CD4-positive, alpha-beta memory T cell (primary cell): ENCODE measurements at regions of chr19 and their contacts with region 1.

Region 1: DNA sequence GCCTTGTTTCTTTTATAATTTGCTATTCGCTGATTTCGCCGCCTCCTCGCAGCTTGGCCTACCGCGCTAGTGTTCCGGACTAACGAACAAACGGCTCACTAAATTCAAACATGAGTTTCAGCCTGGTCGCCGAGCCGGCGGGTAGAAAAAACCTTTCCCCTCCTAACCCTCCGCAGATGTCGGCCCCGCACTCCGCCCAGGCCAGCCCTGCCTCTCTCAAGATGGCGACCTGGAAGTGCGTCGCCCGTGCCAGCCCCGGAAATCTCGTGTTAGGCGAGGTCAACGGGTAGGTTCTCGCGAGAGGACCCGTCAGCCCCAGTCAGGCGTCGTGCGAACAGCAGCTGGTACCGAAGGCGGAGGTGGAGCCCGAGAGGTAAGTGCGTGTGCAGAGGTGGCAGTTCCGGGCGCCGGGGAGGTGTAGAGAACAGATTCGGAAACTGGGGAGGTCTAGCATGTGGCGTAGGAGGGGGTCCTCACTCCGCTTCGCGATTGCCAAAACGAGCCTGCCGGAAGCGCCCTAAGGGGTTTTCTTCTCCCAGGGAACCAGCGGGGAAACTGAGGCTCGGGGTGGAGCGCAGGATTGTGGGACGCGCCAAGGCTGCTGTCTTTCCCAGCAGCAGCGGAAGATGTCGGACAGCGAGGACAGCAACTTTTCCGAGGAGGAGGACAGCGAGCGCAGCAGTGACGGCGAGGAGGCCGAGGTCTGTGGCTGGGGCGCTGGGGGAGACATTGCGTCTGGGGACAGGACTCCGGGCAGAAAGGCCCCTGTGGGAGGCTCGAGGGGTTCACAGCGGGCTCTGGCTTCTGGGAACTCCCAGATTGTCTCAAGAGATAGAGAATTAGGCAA is at the start of gene SUPT5H:
- DNase-seq: peak; percentile 96 to 99 (median 99)
- H3K4me3 ChIP-seq: peak within 1 kb of the TSS; percentile 98
- H3K4me3 Mint-ChIP-seq: peak within 1 kb of the TSS; percentile 89 to 98 (median 96)
- H3K27ac ChIP-seq: peak within 1 kb of the TSS; percentile 99
- H3K27ac Mint-ChIP-seq: peak within 1 kb of the TSS; percentile 88 to 98 (median 95)
- H3K4me1 ChIP-seq: peaks cover 52% of the 10 kb centered on the region
- H3K4me1 Mint-ChIP-seq: peaks cover 38 to 65% (median 48%) of the 10 kb centered on the region in 4 donors
- H3K27me3 ChIP-seq: no peaks in the 10 kb centered on the region
- H3K27me3 Mint-ChIP-seq: peaks cover 0 to 2% of the 10 kb centered on the region in 2 donors
- total RNA-seq, gene SUPT5H: 234 to 236 TPM

Region 2: DNA sequence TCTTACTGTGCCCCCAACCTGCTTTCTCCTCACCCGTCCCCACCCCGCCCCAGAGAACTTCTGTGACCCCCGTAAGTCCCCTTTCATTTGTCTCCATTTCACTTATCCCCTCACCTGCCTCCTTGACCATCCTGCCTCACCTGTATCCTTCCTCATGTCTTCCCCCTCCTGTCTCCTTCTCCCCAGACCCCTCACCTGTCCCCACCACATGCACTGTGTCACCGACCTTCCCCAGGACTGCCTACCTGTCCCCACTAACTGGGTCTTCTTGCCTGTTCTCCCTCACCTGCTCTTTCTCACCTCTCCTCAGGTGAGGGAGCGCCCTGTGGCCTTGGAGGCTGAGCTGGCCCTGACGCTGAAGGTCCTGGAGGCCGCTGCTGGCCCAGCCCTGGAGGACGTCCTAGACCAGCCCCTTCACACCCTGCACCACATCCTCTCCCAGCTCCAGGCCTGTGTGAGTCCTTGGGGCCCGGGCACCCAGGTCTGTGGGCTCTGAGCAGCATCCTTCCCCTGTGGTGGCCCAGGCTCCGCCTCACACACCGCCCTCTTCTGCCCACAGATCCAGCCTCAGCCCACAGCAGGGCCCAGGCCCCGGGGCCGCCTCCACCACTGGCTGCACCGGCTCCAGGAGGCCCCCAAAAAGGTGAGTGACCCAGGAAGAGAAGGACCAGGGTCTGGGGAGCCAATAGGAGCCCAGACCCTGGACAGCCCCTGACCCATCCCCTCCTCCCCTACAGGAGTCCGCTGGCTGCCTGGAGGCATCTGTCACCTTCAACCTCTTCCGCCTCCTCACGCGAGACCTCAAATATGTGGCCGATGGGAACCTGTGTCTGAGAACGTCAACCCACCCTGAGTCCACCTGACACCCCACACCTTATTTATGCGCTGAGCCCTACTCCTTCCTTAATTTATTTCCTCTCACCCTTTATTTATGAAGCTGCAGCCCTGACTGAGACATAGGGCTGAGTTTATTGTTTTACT is 147.5 kb before region 1 on chr19:
- CTCF ChIA-PET with region 1: no interaction called
- POLR2A ChIA-PET with region 1: no interaction called
- intact Hi-C with region 1: no loop called
- DNase-seq: peak; percentile 56 to 75 (median 70)
- H3K4me3 ChIP-seq: peak overlapping the region in 1 of 2 donors; percentile 15
- H3K4me3 Mint-ChIP-seq: peak overlapping the region; percentile 60 to 85 (median 80)
- H3K27ac ChIP-seq: no peak overlapping the region
- H3K27ac Mint-ChIP-seq: peak overlapping the region; percentile 54 to 91 (median 77)
- H3K4me1 ChIP-seq: peaks cover 15% of the 10 kb centered on the region
- H3K4me1 Mint-ChIP-seq: peaks cover 10 to 33% (median 20%) of the 10 kb centered on the region in 4 donors
- H3K27me3 ChIP-seq: no peaks in the 10 kb centered on the region
- H3K27me3 Mint-ChIP-seq: no peaks in the 10 kb centered on the region

Region 3: DNA sequence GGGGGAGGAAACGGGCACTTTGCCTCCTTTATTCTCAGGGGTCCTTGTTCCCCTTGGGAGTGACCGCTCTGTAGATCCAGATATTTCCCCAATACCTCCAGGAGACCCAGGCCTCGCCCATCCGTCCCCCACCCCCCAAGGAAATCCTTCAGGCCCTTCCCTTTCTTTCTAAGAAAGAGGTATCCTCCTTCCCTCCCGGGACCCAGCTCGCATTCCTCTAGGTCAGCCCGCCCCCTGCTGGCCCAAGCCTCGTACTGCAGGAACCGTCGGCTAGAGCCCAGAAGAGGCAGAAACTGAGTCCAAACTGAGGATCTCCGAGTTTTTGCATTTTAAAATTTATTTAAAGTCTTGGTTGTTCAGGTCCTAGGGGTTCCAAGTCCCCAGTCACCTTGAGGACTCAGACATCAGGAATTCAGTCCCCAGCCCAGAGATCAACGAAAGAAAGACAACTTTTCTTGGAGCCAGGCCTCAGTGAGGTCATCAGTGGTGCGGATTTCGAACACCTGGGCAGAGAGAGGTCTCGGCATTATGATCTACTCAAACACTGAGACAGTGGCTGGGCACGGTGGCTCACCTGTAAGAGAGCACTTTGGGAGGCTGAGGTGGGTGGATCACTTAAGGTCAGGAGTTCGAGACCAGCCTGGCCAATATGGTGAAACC is 117.3 kb before region 1 on chr19:
- CTCF ChIA-PET with region 1: no interaction called
- POLR2A ChIA-PET with region 1: no interaction called
- intact Hi-C with region 1: no loop called
- DNase-seq: peak; percentile 67 to 77 (median 73)
- H3K4me3 ChIP-seq: no peak overlapping the region
- H3K4me3 Mint-ChIP-seq: peak overlapping the region in 4 of 8 donors; percentile 32 to 78 (median 58)
- H3K27ac ChIP-seq: peak overlapping the region; percentile 18
- H3K27ac Mint-ChIP-seq: peak overlapping the region; percentile 73 to 92 (median 87)
- H3K4me1 ChIP-seq: peaks cover 64% of the 10 kb centered on the region
- H3K4me1 Mint-ChIP-seq: peaks cover 21 to 51% (median 34%) of the 10 kb centered on the region in 4 donors
- H3K27me3 ChIP-seq: no peaks in the 10 kb centered on the region
- H3K27me3 Mint-ChIP-seq: no peaks in the 10 kb centered on the region

Region 4: DNA sequence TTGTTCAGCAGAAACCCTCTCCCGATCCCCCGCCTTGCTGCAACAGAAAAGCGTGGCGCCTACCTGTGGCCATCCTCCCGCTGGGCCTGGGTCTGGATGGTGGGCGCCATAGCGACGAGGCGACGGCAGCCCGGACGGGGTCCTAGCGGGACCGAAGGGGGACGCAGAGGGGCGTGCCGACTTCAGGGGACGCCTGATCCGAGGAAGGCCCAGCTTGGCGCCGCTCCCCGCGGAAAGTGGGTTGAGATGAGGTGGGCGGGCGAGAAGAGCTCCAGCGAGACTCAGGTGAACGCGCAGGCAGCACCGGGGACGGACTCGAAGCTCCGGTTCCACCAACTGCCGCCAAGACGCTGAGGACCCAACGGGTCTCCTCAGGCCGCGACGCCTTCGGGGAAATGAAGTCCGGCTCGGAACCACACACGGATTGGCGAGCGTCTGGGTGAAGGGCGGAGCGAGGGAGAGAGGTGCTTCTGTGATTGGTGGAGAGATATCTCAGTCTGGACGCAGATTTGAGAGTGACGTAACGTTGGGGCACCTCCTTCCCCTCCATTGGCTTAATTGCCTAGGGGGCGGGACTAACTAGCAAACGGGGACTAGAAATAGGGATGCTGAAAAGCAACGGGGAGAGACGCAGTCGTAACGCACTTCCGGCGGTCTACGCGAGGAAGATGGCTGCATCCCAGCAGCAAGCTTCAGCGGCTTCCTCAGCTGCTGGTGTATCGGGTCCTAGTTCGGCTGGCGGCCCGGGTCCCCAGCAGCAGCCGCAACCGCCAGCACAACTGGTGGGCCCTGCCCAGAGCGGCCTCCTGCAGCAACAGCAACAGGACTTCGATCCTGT is 54.5 kb before region 1 on chr19 and contains the starts of genes MED29 and PAF1:
- CTCF ChIA-PET with region 1: interaction called, 5 read pairs
- POLR2A ChIA-PET with region 1: interaction called, 28 read pairs
- intact Hi-C with region 1: loop called (anchors 2 kb)
- DNase-seq: peak; percentile 96 to 99 (median 99)
- H3K4me3 ChIP-seq: peak within 1 kb of the TSS; percentile 71 to 93
- H3K4me3 Mint-ChIP-seq: peak within 1 kb of the TSS; percentile 90 to 99 (median 98)
- H3K27ac ChIP-seq: peak within 1 kb of the TSS; percentile 99
- H3K27ac Mint-ChIP-seq: peak within 1 kb of the TSS; percentile 93 to 100 (median 100)
- H3K4me1 ChIP-seq: peaks cover 26% of the 10 kb centered on the region
- H3K4me1 Mint-ChIP-seq: peaks cover 22 to 46% (median 33%) of the 10 kb centered on the region in 4 donors
- H3K27me3 ChIP-seq: no peaks in the 10 kb centered on the region
- H3K27me3 Mint-ChIP-seq: no peaks in the 10 kb centered on the region
- total RNA-seq, gene MED29: 43.1 to 51.3 TPM
- total RNA-seq, gene PAF1: 49.2 to 53.8 TPM

Region 5: DNA sequence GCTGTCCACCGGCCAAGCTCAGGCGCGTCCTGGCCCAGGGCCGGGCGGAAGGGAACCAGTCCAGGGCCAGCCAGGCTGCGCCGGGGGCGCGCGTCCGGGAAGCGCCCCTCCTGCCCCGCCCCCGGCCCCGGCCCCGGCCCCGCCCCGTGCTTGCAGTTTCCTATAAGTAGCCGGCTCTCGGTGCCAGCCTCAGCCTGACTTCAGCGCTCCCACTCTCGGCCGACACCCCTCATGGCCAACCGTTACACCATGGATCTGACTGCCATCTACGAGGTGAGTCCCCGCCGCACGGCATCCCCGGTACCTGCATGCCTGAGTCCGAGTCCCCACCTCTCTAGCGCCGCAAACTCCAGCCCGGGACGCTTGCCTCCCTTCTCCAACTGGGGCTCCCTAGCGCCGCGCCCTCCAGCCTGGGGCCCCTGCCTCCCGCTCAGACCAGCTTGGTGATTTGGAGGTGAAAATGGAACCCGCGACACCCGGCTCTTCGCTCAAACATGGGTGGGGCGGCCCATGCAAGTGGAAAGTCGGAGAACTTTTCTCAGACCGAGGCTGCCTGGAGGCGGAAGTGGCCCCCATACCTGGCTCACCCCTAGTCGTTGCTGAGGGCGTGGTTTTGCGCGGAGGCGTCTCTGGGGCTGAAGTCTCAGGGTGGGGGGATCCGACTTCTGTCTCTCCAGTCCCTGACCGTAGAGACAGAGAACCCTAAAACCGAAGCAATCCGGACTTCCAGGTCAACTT is 38.7 kb before region 1 on chr19 and contains the start of gene ZFP36:
- CTCF ChIA-PET with region 1: interaction called, 6 read pairs
- POLR2A ChIA-PET with region 1: interaction called, 17 read pairs
- intact Hi-C with region 1: no loop called
- DNase-seq: peak; percentile 86 to 88 (median 87)
- H3K4me3 ChIP-seq: peak within 1 kb of the TSS; percentile 97 to 100
- H3K4me3 Mint-ChIP-seq: peak within 1 kb of the TSS; percentile 88 to 99 (median 97)
- H3K27ac ChIP-seq: peak within 1 kb of the TSS; percentile 100
- H3K27ac Mint-ChIP-seq: peak within 1 kb of the TSS; percentile 99 to 100 (median 100)
- H3K4me1 ChIP-seq: peaks cover 66% of the 10 kb centered on the region
- H3K4me1 Mint-ChIP-seq: peaks cover 38 to 95% (median 55%) of the 10 kb centered on the region in 4 donors
- H3K27me3 ChIP-seq: no peaks in the 10 kb centered on the region
- H3K27me3 Mint-ChIP-seq: peaks cover 0 to 2% of the 10 kb centered on the region in 2 donors
- total RNA-seq, gene ZFP36: 151 to 152 TPM

Region 6: GRCh38 chr19:39480337-39481228 is 35.1 kb after region 1 on chr19 and contains the start of gene TIMM50:
- CTCF ChIA-PET with region 1: interaction called, 13 read pairs
- POLR2A ChIA-PET with region 1: interaction called, 18 read pairs
- intact Hi-C with region 1: loop called (anchors 2 kb)
- DNase-seq: peak; percentile 93 to 96 (median 94)
- H3K4me3 ChIP-seq: peak within 1 kb of the TSS; percentile 83 to 93
- H3K4me3 Mint-ChIP-seq: peak within 1 kb of the TSS; percentile 90 to 96 (median 94)
- H3K27ac ChIP-seq: peak within 1 kb of the TSS; percentile 82
- H3K27ac Mint-ChIP-seq: peak within 1 kb of the TSS; percentile 92 to 98 (median 96)
- H3K4me1 ChIP-seq: peaks cover 17% of the 10 kb centered on the region
- H3K4me1 Mint-ChIP-seq: peaks cover 15 to 41% (median 25%) of the 10 kb centered on the region in 4 donors
- H3K27me3 ChIP-seq: no peaks in the 10 kb centered on the region
- H3K27me3 Mint-ChIP-seq: no peaks in the 10 kb centered on the region
- total RNA-seq, gene TIMM50: 47.2 to 49.6 TPM

Region 7: GRCh38 chr19:39532233-39533002 is 86.9 kb after region 1 on chr19 and contains the start of gene EID2B:
- CTCF ChIA-PET with region 1: interaction called, 56 read pairs
- POLR2A ChIA-PET with region 1: interaction called, 13 read pairs
- intact Hi-C with region 1: loop called (anchors 1 kb)
- DNase-seq: peak; percentile 92 to 95 (median 94)
- H3K4me3 ChIP-seq: peak within 1 kb of the TSS; percentile 19 to 92
- H3K4me3 Mint-ChIP-seq: peak within 1 kb of the TSS; percentile 91 to 96 (median 94)
- H3K27ac ChIP-seq: peak within 1 kb of the TSS; percentile 83
- H3K27ac Mint-ChIP-seq: peak within 1 kb of the TSS; percentile 81 to 95 (median 92)
- H3K4me1 ChIP-seq: peaks cover 20% of the 10 kb centered on the region
- H3K4me1 Mint-ChIP-seq: peaks cover 14 to 43% (median 28%) of the 10 kb centered on the region in 4 donors
- H3K27me3 ChIP-seq: no peaks in the 10 kb centered on the region
- H3K27me3 Mint-ChIP-seq: no peaks in the 10 kb centered on the region
- total RNA-seq, gene EID2B: 7.7 to 8.8 TPM

Region 8: GRCh38 chr19:39546599-39546998 is 101.1 kb after region 1 on chr19:
- CTCF ChIA-PET with region 1: interaction called, 12 read pairs
- POLR2A ChIA-PET with region 1: interaction called, 5 read pairs
- intact Hi-C with region 1: no loop called
- DNase-seq: no peak
- H3K4me3 ChIP-seq: no peak overlapping the region
- H3K4me3 Mint-ChIP-seq: peak overlapping the region in 2 of 8 donors; percentile 30 to 32
- H3K27ac ChIP-seq: no peak overlapping the region
- H3K27ac Mint-ChIP-seq: peak overlapping the region in 4 of 7 donors; percentile 47 to 82 (median 62)
- H3K4me1 ChIP-seq: peaks cover 45% of the 10 kb centered on the region
- H3K4me1 Mint-ChIP-seq: peaks cover 25 to 50% (median 37%) of the 10 kb centered on the region in 4 donors
- H3K27me3 ChIP-seq: no peaks in the 10 kb centered on the region
- H3K27me3 Mint-ChIP-seq: peaks cover 0 to 2% of the 10 kb centered on the region in 2 donors

Region 9: DNA sequence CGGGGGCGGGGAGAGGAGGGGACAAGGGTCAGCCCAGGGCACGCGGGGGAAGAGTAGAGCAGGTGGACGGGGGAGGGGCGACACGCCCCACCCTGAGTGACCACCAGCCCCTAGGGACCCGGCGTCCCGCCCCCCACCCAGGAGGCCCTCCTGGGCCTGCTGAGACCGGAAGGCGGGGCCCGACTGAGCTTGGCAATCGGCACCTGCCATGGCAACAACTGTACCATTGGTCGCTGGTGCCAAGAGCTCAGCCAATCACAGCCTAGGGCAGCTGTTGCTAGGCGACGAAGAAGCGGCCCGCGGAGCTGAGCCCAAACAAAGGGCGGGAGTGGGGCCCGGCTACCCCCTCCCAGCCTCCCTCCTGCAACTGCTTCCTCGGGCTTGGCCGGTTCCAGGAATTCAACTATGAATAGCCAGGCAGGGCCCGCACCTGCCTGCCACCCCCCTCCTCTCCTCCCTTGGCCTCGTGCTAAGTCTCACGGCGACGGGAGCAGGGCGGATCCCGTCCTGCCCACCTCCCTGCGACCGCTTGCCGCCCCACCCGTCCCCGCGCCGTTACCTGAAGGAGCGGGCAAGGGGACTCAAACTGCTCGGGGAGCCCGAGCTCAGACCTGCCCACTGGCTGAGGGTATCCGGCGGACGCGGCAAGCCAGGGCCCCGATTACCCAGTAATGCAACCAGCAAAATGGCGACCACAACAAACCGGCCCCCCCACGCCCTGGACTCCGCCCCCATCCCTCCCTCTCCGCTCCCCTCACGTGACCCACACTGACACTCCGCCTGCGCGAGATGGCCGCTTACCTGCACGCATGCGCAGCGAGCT is 388.2 kb after region 1 on chr19 and contains the start of gene DYRK1B:
- CTCF ChIA-PET with region 1: no interaction called
- POLR2A ChIA-PET with region 1: interaction called, 3 read pairs
- intact Hi-C with region 1: loop called (anchors 5 kb)
- DNase-seq: peak; percentile 96 to 98 (median 98)
- H3K4me3 ChIP-seq: peak within 1 kb of the TSS; percentile 81 to 98
- H3K4me3 Mint-ChIP-seq: peak within 1 kb of the TSS; percentile 79 to 90 (median 86)
- H3K27ac ChIP-seq: peak within 1 kb of the TSS; percentile 91
- H3K27ac Mint-ChIP-seq: peak within 1 kb of the TSS; percentile 77 to 99 (median 96)
- H3K4me1 ChIP-seq: peaks cover 30% of the 10 kb centered on the region
- H3K4me1 Mint-ChIP-seq: peaks cover 24 to 39% (median 31%) of the 10 kb centered on the region in 4 donors
- H3K27me3 ChIP-seq: no peaks in the 10 kb centered on the region
- H3K27me3 Mint-ChIP-seq: no peaks in the 10 kb centered on the region
- total RNA-seq, gene DYRK1B: 28.4 to 30.9 TPM